Activated T-helper 1 cell treated with anti-CD3 and anti-CD28 coated beads, Interleukin-12 subunit alpha, Interleukin-12 subunit beta, Interleukin-2, Interleukin-4 antibody, amounts not matched to agents 30 ng/mL and 10 ng/mL and 1 ng/mL, durations not matched to agents 14 hours and 24 hours and 36 hours (primary cell): ENCODE measurements at regions of chr6 and their contacts with region 1.

Region 1: DNA sequence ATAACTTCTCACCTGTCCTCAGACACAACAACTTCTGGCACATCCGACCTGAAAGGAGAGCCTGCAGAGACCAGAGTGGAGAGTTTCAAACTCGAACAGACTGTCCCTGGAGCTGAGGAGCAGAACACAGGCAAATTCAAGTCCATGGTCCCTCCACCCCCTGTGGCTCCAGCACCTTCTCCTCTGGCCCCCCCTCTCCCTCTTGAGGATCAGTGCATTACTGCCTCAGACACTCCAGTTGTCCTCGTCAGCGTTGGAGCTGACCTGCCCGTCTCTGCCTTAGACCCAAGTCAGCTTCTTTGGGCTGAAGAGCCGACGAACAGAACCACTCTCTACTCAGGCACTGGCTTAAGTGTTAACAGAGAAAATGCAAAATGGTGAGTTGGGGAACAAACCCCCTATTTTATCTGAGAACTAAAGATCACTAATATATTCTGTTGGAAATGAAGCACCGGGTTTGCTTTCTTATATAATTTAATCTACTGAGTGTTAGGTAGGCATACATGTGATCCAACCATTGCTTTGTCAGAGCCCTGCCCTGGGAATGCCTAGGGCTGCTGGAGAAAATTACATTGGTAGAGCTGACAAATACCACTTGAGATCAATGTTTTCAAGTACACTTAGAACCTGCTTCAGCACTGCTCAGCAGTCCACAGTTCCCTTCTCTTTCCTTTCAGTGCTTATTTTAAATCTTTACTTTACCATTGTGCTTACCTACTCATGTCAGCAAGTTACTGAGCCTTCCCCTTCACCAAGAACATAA is 77.5 kb upstream of the LTV1 start:
- DNase-seq: no peak
- H3K4me3 Mint-ChIP-seq: no peak overlapping the region
- H3K27ac Mint-ChIP-seq: no peak overlapping the region
- H3K4me1 Mint-ChIP-seq: no peaks in the 10 kb centered on the region
- H3K27me3 Mint-ChIP-seq: no peaks in the 10 kb centered on the region

Region 2: GRCh38 chr6:143811501-143812157 is 46.0 kb after region 1 on chr6:
- intact Hi-C with region 1: loop called (anchors 5 kb)
- DNase-seq: no peak
- H3K4me3 Mint-ChIP-seq: no peak overlapping the region
- H3K27ac Mint-ChIP-seq: no peak overlapping the region
- H3K4me1 Mint-ChIP-seq: peaks cover 32% of the 10 kb centered on the region
- H3K27me3 Mint-ChIP-seq: no peaks in the 10 kb centered on the region

Region 3: DNA sequence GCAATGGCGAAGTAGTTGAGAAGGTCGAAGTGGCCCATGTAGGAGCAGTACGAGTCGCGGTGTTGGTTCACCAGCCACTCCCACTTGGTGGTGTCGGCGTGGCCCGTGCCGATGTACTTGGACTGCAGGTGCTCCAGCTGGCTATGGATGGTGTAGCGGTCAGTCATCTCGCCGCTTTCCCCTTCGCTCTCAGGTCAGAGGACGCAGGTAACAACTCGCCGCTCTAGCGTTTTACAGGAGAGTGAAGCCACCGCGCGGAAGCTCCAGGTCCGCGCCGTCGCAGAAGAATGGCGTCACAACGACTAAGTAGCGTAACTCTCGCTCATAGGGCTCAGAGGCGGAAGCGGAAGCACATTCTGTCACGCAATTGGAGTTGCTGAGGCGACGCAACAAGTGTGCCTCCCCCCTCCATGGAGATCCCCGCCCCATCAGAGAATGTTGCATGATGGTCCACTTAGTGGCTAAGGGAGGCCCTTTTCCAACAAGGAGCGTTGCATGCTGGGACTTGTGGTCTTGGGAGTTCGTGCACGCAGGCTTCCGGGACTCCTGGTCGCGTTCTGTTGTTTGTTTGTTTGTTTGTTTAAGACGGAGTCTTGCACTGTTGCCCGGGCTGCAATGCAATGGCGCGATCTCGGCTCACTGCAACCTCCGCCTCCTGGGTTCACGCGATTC is 329.9 kb after region 1 on chr6 and contains the start of gene SF3B5:
- intact Hi-C with region 1: no loop called
- DNase-seq: peak; percentile 96
- H3K4me3 Mint-ChIP-seq: peak within 1 kb of the TSS; percentile 96
- H3K27ac Mint-ChIP-seq: peak within 1 kb of the TSS; percentile 98
- H3K4me1 Mint-ChIP-seq: peaks cover 39% of the 10 kb centered on the region
- H3K27me3 Mint-ChIP-seq: no peaks in the 10 kb centered on the region
- total RNA-seq, gene SF3B5: 204 and 232 TPM in 2 replicates